ENCODE measurements at regions of chr1 and their contacts with region 1.

Region 1: GRCh38 chr1:184743062-184743756 is 11.4 kb downstream of the EDEM3 start:
- DNase-seq: no peak
- H3K4me3 Mint-ChIP-seq: no peak overlapping the region
- H3K27ac Mint-ChIP-seq: peak overlapping the region; percentile 74
- H3K4me1 Mint-ChIP-seq: peaks cover 60% of the 10 kb centered on the region
- H3K27me3 Mint-ChIP-seq: no peaks in the 10 kb centered on the region

Region 2: DNA sequence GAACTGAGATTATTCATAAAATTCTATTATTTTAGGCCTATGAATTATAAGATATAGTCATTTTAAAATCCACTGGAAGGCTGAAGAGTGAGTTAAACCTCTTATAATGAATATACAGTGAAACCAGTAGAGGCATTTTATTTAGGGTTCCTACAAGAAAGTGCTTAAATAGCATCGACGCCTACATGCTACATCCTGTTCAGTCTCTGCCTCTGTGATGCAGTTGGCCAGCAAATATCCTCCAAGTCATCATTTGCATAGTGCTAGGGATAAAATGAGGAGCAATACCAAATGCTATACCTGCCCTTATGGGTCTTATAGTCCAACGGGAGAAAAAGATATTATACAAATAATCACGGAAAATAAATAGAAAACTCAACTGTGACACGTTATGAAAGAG is 48.2 kb before region 1 on chr1:
- CTCF ChIA-PET with region 1: no interaction called
- POLR2A ChIA-PET with region 1: no interaction called
- intact Hi-C with region 1: loop called (anchors 2 kb)
- DNase-seq: peak; percentile 18
- H3K4me3 Mint-ChIP-seq: no peak overlapping the region
- H3K27ac Mint-ChIP-seq: no peak overlapping the region
- H3K4me1 Mint-ChIP-seq: peaks cover 15% of the 10 kb centered on the region
- H3K27me3 Mint-ChIP-seq: no peaks in the 10 kb centered on the region

Region 3: DNA sequence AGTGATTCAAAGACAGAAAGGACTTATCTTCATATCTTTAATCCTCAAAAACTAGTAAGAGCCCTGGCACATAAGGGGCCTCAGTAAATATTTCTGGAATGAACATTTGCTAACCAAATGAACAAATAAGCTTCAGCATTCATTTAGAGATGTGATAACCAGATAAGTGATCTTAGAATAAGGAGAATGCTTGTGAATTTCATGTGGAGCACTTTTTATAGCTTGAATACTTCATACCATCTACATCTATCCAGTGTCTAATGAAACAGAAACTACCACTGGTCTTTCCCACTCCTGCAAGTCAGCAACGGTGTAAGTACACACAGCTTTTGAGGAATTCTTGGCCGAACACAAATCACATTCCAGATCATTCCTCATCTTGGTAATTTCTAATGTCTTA is 27.1 kb before region 1 on chr1:
- CTCF ChIA-PET with region 1: no interaction called
- POLR2A ChIA-PET with region 1: no interaction called
- intact Hi-C with region 1: no loop called
- DNase-seq: no peak
- H3K4me3 Mint-ChIP-seq: no peak overlapping the region
- H3K27ac Mint-ChIP-seq: no peak overlapping the region
- H3K4me1 Mint-ChIP-seq: no peaks in the 10 kb centered on the region
- H3K27me3 Mint-ChIP-seq: no peaks in the 10 kb centered on the region

Region 4: DNA sequence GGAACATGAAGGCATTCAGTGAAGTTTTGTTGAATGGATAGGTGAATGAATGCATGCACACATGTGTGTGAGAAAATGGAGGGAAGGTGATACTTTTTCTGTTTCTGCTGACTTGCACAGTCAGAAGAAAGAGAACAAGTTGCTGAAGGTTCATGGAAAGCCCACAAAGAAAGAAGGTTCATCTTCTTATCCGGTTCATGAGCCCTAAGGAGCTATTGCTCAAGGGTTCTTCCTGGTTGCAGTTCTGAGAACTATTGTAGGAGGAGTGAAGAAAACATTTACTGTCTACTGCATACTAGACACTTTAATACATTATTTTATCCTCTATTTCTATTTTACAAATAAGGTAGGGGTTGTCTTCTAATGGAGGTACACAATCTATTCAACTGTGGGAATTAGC is 244.5 kb after region 1 on chr1:
- CTCF ChIA-PET with region 1: no interaction called
- POLR2A ChIA-PET with region 1: no interaction called
- intact Hi-C with region 1: no loop called
- DNase-seq: no peak
- H3K4me3 Mint-ChIP-seq: no peak overlapping the region
- H3K27ac Mint-ChIP-seq: no peak overlapping the region
- H3K4me1 Mint-ChIP-seq: no peaks in the 10 kb centered on the region
- H3K27me3 Mint-ChIP-seq: peaks cover 4% of the 10 kb centered on the region

Measured in activated CD4-positive, alpha-beta memory T cell treated with anti-CD3 and anti-CD28 coated beads for 36 hours (primary cell).